Heart left ventricle (tissue), 16 donors: ENCODE measurements at regions of chr12 and their contacts with region 1.

Region 1: DNA sequence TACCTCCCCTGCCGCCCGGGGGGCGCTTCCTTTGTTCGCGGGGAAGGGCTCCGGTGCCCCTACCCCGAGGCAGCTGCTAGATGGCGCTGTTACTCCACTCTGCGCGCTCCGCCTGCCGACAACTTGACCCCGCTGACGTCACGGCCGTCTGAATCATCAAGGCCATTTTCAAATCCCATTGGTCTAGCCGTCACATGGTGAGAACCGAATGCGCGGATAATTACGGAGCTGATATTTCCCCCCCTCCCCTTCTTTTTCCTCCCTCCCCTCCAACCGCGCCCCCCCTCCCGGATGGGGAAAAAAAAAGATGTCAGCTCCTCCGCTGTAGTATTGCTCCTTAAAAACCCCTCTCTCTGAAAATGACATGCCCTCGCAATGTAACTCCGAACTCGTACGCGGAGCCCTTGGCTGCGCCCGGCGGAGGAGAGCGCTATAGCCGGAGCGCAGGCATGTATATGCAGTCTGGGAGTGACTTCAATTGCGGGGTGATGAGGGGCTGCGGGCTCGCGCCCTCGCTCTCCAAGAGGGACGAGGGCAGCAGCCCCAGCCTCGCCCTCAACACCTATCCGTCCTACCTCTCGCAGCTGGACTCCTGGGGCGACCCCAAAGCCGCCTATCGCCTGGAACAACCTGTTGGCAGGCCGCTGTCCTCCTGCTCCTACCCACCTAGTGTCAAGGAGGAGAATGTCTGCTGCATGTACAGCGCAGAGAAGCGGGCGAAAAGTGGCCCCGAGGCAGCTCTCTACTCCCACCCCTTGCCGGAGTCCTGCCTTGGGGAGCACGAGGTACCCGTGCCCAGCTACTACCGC is at the start of gene HOXC10:
- DNase-seq: peak; percentile 50 to 83 (median 79)
- ATAC-seq: peak in 3 of 4 donors; percentile 53 to 77 (median 72)
- H3K4me3 ChIP-seq: peak within 1 kb of the TSS in 5 of 12 donors; percentile 5 to 15 (median 7)
- H3K27ac ChIP-seq: no peak within 1 kb of the TSS
- H3K4me1 ChIP-seq: peaks cover 0 to 27% (median 13%) of the 10 kb centered on the region in 12 donors
- H3K27me3 ChIP-seq: peaks cover 69 to 100% (median 98%) of the 10 kb centered on the region in 9 donors
- CTCF ChIP-seq: peak in 10 of 12 donors; percentile 8 to 52 (median 32)
- POLR2A ChIP-seq: no peak
- total RNA-seq, gene HOXC10: not detected

Region 2: DNA sequence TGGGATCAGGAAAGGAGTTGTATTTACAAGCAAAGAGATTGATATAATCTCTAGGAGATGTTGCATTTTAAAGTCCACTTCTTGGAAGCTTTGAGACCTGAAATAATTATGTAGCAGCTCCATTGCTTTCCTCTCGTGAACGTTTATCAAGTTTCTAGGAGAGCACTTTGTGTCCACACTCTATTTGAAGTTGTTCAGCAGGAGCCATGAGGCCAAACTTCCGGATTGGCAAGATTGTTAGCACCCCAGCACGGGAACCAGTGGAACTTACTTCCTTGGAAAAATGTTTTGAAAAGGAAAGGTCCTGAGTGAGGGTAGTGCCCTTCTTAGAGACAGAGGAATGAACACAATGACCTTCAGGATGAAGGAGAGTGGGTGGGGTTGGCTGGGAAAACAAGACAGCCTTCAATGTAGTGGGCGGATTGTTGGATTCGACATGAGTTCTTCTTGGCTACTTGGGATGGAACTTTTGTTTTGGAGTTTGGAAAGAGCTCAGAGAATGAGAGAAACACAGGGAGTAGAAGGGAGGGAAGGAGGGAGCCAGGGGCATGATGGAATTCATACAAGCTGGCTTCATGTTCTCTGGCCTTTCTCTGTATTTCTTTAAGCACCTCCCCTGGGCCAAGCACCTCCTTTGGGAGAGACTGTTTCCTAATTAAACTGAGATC is 209.5 kb before region 1 on chr12:
- intact Hi-C with region 1: loop called in 1 of 10 experiments (anchors 5 kb)
- DNase-seq: peak in 4 of 5 donors; percentile 33 to 53 (median 42)
- ATAC-seq: peak; percentile 63 to 89 (median 84)
- H3K4me3 ChIP-seq: no peak overlapping the region
- H3K27ac ChIP-seq: peak overlapping the region in 6 of 12 donors; percentile 3 to 66 (median 61)
- H3K4me1 ChIP-seq: peaks cover 0 to 11% (median 0%) of the 10 kb centered on the region in 12 donors
- H3K27me3 ChIP-seq: peaks cover 0 to 30% (median 4%) of the 10 kb centered on the region in 9 donors
- CTCF ChIP-seq: no peak
- POLR2A ChIP-seq: no peak